ENCODE measurements at regions of chr19 and their contacts with region 1.

Region 1: GRCh38 chr19:45439569-45440254 is 16.0 kb upstream of the ERCC1 start:
- DNase-seq: peak; percentile 69 to 89
- H3K4me3 ChIP-seq: peak overlapping the region; percentile 61
- H3K4me3 Mint-ChIP-seq: peak overlapping the region; percentile 84
- H3K27ac Mint-ChIP-seq: peak overlapping the region; percentile 88
- H3K4me1 ChIP-seq: peaks cover 20% of the 10 kb centered on the region
- H3K4me1 Mint-ChIP-seq: peaks cover 21% of the 10 kb centered on the region
- H3K27me3 ChIP-seq: no peaks in the 10 kb centered on the region
- H3K27me3 Mint-ChIP-seq: no peaks in the 10 kb centered on the region
- CTCF ChIP-seq: peak; percentile 95 to 99

Region 2: GRCh38 chr19:45450012-45450333 is 10.3 kb after region 1 on chr19:
- CTCF ChIA-PET with region 1: interaction called, 14 read pairs
- POLR2A ChIA-PET with region 1: no interaction called
- intact Hi-C with region 1: loop called (anchors 2 kb)
- DNase-seq: no peak
- H3K4me3 ChIP-seq: peak overlapping the region; percentile 51
- H3K4me3 Mint-ChIP-seq: peak overlapping the region; percentile 82
- H3K27ac Mint-ChIP-seq: peak overlapping the region; percentile 98
- H3K4me1 ChIP-seq: peaks cover 24% of the 10 kb centered on the region
- H3K4me1 Mint-ChIP-seq: peaks cover 39% of the 10 kb centered on the region
- H3K27me3 ChIP-seq: no peaks in the 10 kb centered on the region
- H3K27me3 Mint-ChIP-seq: no peaks in the 10 kb centered on the region
- CTCF ChIP-seq: no peak

Region 3: GRCh38 chr19:45455707-45456499 is 16.2 kb after region 1 on chr19:
- CTCF ChIA-PET with region 1: interaction called, 21 read pairs
- POLR2A ChIA-PET with region 1: no interaction called
- intact Hi-C with region 1: loop called (anchors 2 kb)
- DNase-seq: peak; percentile 95
- H3K4me3 ChIP-seq: no peak overlapping the region
- H3K4me3 Mint-ChIP-seq: peak overlapping the region; percentile 46
- H3K27ac Mint-ChIP-seq: peak overlapping the region; percentile 96
- H3K4me1 ChIP-seq: peaks cover 26% of the 10 kb centered on the region
- H3K4me1 Mint-ChIP-seq: peaks cover 30% of the 10 kb centered on the region
- H3K27me3 ChIP-seq: no peaks in the 10 kb centered on the region
- H3K27me3 Mint-ChIP-seq: no peaks in the 10 kb centered on the region
- CTCF ChIP-seq: no peak

Region 4: DNA sequence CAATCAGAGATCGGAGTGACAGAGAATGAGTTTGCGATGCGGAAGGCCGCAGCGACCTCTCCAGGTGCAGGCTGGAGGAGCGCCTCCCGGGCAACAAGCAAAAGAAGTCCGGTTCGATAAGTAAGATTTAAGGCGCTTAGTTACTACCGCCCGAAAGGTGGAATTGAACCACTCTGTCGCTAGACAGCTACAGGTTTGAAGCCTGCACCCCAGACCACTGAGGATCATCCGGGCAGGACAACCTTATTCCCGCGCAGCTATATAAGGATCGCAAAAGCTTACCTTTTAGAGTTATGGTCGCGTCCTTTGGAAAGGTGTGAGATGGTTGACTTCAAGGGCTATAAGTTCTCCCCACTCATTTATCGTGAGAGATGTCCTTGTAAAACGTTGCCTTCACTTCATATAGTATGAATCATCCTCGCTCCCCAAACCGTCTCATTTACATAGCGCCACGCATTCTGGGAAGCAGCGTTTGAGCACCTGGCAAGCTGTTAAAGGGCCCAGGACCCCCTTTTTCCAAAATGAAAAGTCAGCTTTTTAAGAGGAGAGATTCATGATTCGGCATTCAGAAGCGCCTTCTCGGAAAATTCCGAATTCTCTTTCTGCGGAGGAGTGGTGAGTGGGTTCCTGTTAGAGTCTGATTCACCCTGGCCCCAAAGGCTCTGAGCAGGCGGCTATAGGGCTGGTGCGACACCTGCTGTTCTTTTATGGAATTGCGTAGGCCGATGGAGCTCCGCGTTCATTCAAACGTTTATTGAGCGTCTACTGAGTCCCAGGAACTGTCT is 38.9 kb after region 1 on chr19:
- CTCF ChIA-PET with region 1: interaction called, 261 read pairs
- POLR2A ChIA-PET with region 1: interaction called, 12 read pairs
- intact Hi-C with region 1: loop called (anchors 1 kb)
- DNase-seq: peak; percentile 92 to 94
- H3K4me3 ChIP-seq: peak overlapping the region; percentile 53
- H3K4me3 Mint-ChIP-seq: peak overlapping the region; percentile 53
- H3K27ac Mint-ChIP-seq: peak overlapping the region; percentile 99
- H3K4me1 ChIP-seq: 0 out of 2 replicates have a peak, but pooled peaks cover 4% of the 10 kb centered on the region
- H3K4me1 Mint-ChIP-seq: peaks cover 7% of the 10 kb centered on the region
- H3K27me3 ChIP-seq: no peaks in the 10 kb centered on the region
- H3K27me3 Mint-ChIP-seq: peaks cover 2% of the 10 kb centered on the region
- CTCF ChIP-seq: peak; percentile 94 to 96

Region 5: DNA sequence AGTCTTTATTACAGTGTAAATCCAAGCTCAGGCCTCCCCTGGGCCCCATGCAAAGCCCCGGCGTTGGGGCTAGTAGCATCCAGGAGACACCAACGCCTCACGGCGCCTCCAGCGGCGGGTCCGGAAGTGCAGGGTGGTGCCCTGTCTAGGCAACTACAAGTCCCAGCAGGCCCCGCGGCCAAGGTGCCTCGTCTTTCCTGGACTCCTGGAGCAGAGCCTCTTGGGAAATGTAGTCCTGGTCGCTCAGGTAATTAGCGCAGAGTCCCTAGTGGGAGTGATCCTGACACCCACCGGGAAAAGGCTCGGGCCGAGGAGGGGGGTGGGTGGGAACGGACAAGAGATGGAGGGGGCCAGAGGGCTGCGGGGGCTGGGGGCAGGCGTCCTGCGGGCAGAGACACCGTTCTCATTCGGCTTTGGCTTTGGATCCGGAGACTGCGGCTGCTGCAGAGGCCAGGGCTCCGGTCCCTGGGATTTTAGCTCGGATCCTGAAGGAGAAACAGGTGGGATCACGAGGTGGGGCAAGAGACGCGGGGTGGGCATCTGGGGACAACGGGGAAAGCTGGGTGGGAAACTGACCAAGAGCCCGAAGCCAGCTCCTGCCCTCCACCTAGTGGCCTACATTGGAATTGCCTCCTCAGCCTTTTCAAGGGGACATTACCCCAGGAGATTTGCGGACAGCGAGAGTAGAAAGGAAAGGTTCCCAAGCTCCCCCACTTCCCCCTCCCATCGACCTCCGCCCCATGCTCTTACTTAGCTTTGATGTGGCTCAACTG is 45.8 kb after region 1 on chr19:
- CTCF ChIA-PET with region 1: interaction called, 261 read pairs
- POLR2A ChIA-PET with region 1: interaction called, 3 read pairs
- intact Hi-C with region 1: no loop called
- DNase-seq: peak; percentile 98
- H3K4me3 ChIP-seq: peak overlapping the region; percentile 66
- H3K4me3 Mint-ChIP-seq: peak overlapping the region; percentile 88
- H3K27ac Mint-ChIP-seq: peak overlapping the region; percentile 74
- H3K4me1 ChIP-seq: no peaks in the 10 kb centered on the region
- H3K4me1 Mint-ChIP-seq: peaks cover 6% of the 10 kb centered on the region
- H3K27me3 ChIP-seq: no peaks in the 10 kb centered on the region
- H3K27me3 Mint-ChIP-seq: no peaks in the 10 kb centered on the region
- CTCF ChIP-seq: peak; percentile 91 to 92

Measured in Caco-2 (cell line).